ENCODE measurements at regions of chr14 and their contacts with region 1.

Region 1: DNA sequence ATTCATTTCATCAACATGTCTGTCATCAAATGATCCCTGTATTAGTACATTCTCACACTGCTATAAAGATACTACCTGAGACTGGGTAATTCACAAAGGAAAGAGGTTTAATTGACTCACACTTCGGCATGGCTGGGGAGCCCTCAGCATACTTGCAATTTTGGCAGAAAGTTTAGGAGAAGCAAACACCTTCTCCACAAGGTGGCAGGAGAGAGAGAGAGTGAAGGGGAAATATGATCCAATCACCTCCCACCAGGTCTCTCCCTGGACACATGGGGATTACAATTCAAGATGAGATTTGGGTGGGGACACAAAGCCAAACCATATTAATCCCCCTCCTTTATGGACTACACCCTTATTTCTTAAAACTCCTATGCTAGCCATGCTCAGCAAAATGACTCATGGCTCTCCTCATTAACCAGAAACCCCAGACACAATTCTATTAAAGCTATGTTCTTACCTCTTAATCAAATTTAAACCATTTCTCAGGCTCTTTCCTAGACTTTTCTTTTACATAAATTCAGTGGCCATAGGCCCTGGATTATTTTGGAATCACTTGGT is 932.3 kb downstream of the FLRT2 start:
- DNase-seq: peak in 1 of 2 donors; percentile 6
- ATAC-seq: peak in 1 of 3 donors; percentile 61
- H3K4me3 ChIP-seq: no peak overlapping the region
- H3K4me3 Mint-ChIP-seq: no peak overlapping the region
- H3K27ac ChIP-seq: no peak overlapping the region
- H3K27ac Mint-ChIP-seq: no peak overlapping the region
- H3K4me1 ChIP-seq: no peaks in the 10 kb centered on the region
- H3K4me1 Mint-ChIP-seq: peaks cover 12 to 14% of the 10 kb centered on the region in 2 donors
- H3K27me3 ChIP-seq: no peaks in the 10 kb centered on the region
- H3K27me3 Mint-ChIP-seq: no peaks in the 10 kb centered on the region
- CTCF ChIP-seq: peak; percentile 39

Region 2: DNA sequence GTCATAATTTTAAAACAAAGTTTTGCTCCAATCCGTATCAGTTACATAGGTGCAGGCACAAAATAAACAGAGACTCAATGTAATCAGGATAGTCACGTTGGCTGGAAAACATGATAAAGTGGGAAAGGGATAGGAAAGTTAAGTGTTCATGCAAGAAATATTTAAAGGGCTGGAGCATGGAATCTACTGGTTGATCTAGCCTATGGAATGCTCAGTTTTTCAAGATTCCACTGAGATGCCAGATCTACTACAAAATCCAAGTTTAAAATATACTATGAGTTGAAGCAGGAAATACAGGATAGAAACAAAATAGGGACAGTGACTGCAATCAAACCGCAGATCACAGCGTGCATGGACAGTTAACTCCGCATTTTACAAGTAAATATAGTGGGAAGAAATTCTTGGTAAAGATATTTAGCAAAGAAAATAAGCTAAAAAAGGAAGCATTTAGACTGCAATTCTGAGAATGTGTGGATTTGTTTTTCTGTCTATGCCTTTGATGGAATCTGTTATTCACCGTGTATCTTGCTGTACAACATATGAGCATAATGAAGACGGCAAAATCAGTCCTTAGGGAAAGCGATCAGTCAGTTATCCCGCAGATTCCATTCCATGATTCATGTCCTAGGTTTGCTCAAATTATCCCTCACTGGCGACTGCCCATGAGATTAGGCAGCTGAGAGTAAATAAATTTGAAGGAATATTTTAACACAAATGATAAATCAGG is 111.9 kb after region 1 on chr14:
- intact Hi-C with region 1: no loop called
- DNase-seq: no peak
- ATAC-seq: no peak
- H3K4me3 ChIP-seq: no peak overlapping the region
- H3K4me3 Mint-ChIP-seq: no peak overlapping the region
- H3K27ac ChIP-seq: no peak overlapping the region
- H3K27ac Mint-ChIP-seq: no peak overlapping the region
- H3K4me1 ChIP-seq: no peaks in the 10 kb centered on the region
- H3K4me1 Mint-ChIP-seq: no peaks in the 10 kb centered on the region
- H3K27me3 ChIP-seq: no peaks in the 10 kb centered on the region
- H3K27me3 Mint-ChIP-seq: no peaks in the 10 kb centered on the region
- CTCF ChIP-seq: no peak

Region 3: GRCh38 chr14:86654558-86655184 is 192.4 kb after region 1 on chr14:
- intact Hi-C with region 1: loop called (anchors 1 kb)
- DNase-seq: peak; percentile 29 to 33
- ATAC-seq: no peak
- H3K4me3 ChIP-seq: no peak overlapping the region
- H3K4me3 Mint-ChIP-seq: no peak overlapping the region
- H3K27ac ChIP-seq: no peak overlapping the region
- H3K27ac Mint-ChIP-seq: no peak overlapping the region
- H3K4me1 ChIP-seq: no peaks in the 10 kb centered on the region
- H3K4me1 Mint-ChIP-seq: no peaks in the 10 kb centered on the region
- H3K27me3 ChIP-seq: no peaks in the 10 kb centered on the region
- H3K27me3 Mint-ChIP-seq: no peaks in the 10 kb centered on the region
- CTCF ChIP-seq: peak; percentile 62

Region 4: GRCh38 chr14:87368752-87369151 is 906.5 kb after region 1 on chr14:
- intact Hi-C with region 1: no loop called
- DNase-seq: no peak
- ATAC-seq: no peak
- H3K4me3 ChIP-seq: no peak overlapping the region
- H3K4me3 Mint-ChIP-seq: no peak overlapping the region
- H3K27ac ChIP-seq: no peak overlapping the region
- H3K27ac Mint-ChIP-seq: no peak overlapping the region
- H3K4me1 ChIP-seq: no peaks in the 10 kb centered on the region
- H3K4me1 Mint-ChIP-seq: no peaks in the 10 kb centered on the region
- H3K27me3 ChIP-seq: no peaks in the 10 kb centered on the region
- H3K27me3 Mint-ChIP-seq: no peaks in the 10 kb centered on the region
- CTCF ChIP-seq: no peak

Measured in natural killer cell (primary cell).